Left cardiac atrium (tissue), 4 donors: ENCODE measurements at regions of chr4 and their contacts with region 1.

Region 1: DNA sequence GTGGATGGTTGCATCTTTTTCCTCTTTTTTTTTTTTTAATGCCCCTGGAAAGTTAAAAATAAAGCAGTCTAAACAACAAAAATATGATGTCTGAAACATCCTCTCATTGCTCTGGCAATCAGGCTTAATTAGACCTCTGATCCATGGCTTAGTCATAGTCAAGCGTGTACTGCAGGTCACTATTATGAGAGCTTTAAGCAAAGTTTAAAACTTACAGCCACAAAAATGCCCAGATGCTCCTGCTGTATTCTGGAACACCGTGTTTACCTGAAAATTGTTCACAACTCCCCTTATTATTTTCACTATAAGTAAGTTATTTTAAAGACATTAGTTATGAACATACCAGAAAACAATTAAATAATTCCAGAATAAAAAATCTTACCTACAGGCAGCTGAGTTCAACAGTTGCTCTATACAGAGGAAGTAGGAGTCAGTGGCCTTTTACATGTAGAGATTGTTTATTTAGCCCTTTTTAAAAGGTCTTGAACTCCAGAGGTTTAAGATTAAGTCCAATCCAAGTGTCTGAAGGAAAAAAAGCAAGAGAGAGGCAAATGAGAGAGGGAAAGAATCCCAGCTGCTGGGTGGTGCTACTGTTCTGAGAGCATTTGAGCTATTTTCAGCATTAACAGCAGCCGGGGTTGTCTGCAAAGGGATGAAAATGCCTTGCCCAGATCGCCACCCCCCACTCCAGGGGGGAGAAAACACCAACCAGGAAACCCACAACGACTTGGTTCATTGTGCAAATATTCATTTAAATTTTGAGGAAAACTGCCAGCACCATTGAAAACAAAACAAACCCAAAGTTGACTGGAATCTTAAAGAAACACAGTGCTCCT is 36.9 kb downstream of the SORBS2 start:
- DNase-seq: no peak
- ATAC-seq: peak; percentile 55 to 61

Region 2: GRCh38 chr4:185662030-185662778 is 112.9 kb before region 1 on chr4:
- intact Hi-C with region 1: loop called in 1 of 2 experiments (anchors 5 kb)
- DNase-seq: no peak
- ATAC-seq: peak; percentile 69 to 81

Region 3: GRCh38 chr4:185839194-185839712 is 64.2 kb after region 1 on chr4:
- intact Hi-C with region 1: loop called in 1 of 2 experiments (anchors 5 kb)
- DNase-seq: peak; percentile 45
- ATAC-seq: peak; percentile 79 to 97